ENCODE measurements at regions of chr3 and their contacts with region 1.

Region 1: DNA sequence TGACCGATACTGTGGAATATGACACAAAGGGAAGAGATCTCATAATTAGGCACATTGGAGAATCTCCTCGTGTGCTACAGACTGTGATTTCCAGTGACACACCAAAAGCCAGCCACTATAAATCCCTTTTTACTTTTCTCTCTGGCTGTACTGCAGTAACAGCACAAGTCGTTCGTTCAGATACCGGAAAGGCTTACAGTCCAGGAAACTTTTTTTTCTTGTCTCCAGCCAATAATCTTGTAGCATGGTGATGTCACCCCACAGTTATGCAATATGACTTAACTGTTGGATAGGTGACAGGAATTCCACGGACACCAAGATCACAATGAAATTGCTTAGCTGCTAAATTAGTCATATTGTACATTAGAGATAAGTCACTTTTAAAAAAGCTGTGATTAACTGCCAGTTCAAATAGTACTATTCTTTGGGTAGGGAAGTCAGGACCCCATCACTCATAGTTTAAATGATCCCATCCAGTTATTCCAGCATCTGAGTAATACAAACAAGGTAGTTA is 36.3 kb upstream of the TSC22D2 start:
- DNase-seq: no peak
- ATAC-seq: peak; percentile 86 to 92 (median 90)
- H3K4me3 ChIP-seq: peak overlapping the region; percentile 58
- H3K27ac ChIP-seq: peak overlapping the region; percentile 83
- H3K4me1 ChIP-seq: peaks cover 31% of the 10 kb centered on the region
- H3K27me3 ChIP-seq: no peaks in the 10 kb centered on the region
- CTCF ChIP-seq: no peak

Region 2: DNA sequence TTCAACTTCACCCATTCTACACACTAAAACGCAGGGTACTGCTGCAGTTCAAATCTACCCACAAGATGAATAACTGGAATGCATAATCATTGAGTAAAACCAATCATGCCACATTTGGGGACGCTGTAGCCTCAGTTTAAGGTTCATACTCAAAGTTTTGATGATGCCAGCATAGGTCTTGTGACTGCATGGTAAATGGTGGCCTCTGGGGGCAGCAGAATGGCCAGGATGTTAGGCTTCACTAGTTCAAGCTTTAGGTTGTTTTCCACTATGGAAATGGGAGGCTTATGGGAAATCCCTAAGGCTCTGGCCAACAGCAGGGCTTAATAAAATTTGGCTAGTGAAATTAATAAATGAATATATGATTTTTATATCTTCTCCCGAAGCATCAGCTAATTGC is 68.0 kb before region 1 on chr3:
- intact Hi-C with region 1: loop called in 1 of 2 experiments (anchors 5 kb)
- DNase-seq: no peak
- ATAC-seq: peak in 1 of 4 donors; percentile 35
- H3K4me3 ChIP-seq: no peak overlapping the region
- H3K27ac ChIP-seq: no peak overlapping the region
- H3K4me1 ChIP-seq: no peaks in the 10 kb centered on the region
- H3K27me3 ChIP-seq: peaks cover 0 to 4% (median 0%) of the 10 kb centered on the region in 3 donors
- CTCF ChIP-seq: no peak

Region 3: DNA sequence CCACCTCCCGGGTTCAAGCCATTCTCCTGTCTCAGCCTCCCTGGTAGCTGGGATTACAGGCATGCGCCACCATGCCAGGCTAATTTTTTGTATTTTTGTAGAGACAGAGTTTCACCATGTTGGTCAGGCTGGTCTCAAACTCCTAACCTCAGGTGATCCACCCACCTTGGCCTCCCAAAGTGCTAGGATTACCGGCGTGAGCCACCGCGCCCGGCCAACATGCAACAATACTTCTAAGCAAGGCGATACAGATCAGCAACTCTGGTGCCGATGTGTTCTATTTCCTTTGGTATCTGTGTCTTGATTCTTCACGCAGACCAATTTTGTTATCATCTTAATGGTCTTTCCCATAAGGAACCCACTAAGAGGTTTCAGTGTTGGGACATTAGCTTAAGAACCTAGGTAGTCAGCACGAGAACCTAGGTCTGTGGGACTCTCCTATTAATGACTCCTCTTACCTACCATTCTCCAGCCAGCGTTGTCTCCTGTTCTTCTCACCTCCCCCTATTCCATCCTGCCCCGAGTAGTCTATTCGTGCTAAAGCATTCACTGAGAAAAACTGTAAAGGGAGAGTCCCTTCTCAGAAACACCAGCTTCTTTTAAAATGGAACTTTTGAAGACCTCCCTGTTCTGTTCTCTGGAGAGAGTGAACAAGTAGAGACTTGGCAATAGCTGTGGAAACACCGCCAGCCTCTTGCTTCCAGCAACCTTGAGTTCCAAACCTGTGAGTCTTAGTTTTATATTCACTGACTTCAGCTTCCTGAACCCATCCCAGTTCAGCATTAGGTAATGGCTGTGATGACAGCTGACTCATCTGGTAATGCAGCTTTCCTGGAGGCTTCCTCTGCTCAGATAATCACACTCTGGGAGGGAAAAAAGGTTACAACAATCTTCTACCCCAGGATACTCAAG is 97.5 kb after region 1 on chr3:
- intact Hi-C with region 1: no loop called
- DNase-seq: peak; percentile 61 to 70
- ATAC-seq: peak; percentile 96 to 99 (median 99)
- H3K4me3 ChIP-seq: no peak overlapping the region
- H3K27ac ChIP-seq: peak overlapping the region; percentile 70
- H3K4me1 ChIP-seq: peaks cover 11% of the 10 kb centered on the region
- H3K27me3 ChIP-seq: no peaks in the 10 kb centered on the region
- CTCF ChIP-seq: no peak

Measured in psoas muscle (tissue), 8 donors.